Stomach (tissue), 19 donors: ENCODE measurements at regions of chr11 and their contacts with region 1.

Region 1: DNA sequence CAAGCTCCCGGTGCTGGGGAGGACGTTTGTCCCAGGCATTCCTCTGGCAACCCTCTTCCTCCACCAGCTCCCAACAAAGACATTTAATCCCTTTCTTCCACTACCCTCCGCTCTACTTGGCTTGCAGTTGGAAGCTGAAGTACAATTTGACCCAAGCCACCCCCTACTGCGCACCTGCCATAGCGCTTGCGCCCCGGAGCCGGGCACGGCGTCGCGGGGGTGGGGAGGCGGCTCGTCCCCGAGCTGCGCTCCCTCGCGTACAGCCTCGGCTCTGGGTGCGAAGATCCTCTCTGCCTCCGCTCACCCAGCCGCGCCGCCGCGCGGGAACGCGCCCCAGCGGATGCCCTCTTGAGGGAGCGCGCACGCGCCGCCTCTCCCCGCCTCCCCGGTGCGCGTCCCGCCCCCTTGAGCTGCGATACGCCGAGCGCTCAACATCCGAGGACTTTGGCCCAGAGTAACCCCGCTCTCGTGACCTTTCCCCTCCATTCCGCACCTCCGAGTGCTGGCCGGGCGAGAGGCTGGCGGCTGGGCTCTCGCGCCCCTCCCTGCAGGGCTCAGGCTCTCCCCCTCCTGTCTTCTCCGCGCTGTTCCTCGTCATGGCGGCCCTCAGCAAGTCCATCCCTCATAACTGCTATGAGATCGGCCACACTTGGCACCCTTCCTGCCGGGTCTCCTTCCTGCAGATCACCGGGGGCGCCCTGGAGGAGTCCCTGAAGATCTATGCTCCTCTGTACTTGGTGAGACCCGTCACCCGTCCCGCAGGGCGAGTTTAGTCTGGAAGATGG is at the start of gene TMEM135:
- DNase-seq: peak; percentile 95 to 97
- H3K4me3 ChIP-seq: peak within 1 kb of the TSS; percentile 68 to 91 (median 70)
- H3K27ac ChIP-seq: peak within 1 kb of the TSS; percentile 81 to 91 (median 89)
- H3K4me1 ChIP-seq: peaks cover 11 to 47% (median 26%) of the 10 kb centered on the region in 4 donors
- H3K27me3 ChIP-seq: no peaks in the 10 kb centered on the region
- CTCF ChIP-seq: no peak
- EP300 ChIP-seq: no peak
- POLR2A ChIP-seq: peak in 1 of 4 donors; percentile 11
- total RNA-seq, gene TMEM135: 0.58 to 202 (median 10.3) TPM

Region 2: DNA sequence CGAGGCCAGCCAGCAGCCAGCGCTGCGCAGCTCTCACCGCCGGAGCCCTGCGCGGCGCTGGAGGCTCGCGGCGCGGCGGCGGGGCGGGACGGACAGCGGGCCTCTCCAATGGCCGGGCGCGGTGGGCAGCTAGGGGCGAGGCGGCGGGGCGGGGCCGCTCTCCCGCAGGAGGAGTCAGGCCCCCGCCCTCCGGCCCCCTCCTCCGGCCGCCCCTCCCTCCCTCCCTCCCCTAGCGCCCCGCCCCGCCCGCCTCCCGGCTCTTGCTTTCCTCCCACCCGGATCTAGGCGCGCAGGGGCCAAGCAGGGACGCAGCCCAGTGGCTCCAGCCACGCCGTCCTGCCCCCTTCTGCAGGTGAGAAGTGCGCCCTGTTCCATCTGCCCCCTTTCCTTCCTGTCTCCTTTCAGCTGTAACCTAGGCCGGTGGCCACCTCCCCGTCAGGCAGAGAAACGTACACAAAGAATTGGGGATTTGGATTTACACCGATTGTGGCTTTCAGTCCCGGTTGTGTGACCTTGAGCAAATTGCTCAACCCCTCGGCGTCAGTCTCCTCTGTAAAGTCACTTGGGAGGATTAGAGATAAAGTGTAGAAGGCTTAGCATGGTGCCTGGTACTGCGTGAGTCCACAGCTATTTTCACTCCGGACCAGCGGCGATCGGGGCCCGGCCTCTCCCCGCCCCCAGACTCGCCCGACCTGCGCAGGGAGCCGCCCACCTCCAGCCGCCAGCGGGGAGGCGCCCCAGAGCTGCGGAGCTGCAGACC is 82.1 kb before region 1 on chr11 and contains the start of gene FZD4:
- intact Hi-C with region 1: loop called (anchors 10 kb)
- DNase-seq: peak; percentile 93 to 98
- H3K4me3 ChIP-seq: peak within 1 kb of the TSS; percentile 84 to 97 (median 90)
- H3K27ac ChIP-seq: peak within 1 kb of the TSS; percentile 91 to 96 (median 93)
- H3K4me1 ChIP-seq: peaks cover 26 to 57% (median 46%) of the 10 kb centered on the region in 4 donors
- H3K27me3 ChIP-seq: peaks cover 0 to 10% (median 4%) of the 10 kb centered on the region in 3 donors
- CTCF ChIP-seq: peak in 2 of 7 experiments; percentile 31 to 36
- EP300 ChIP-seq: no peak
- POLR2A ChIP-seq: peak in 2 of 4 donors; percentile 17 to 50
- total RNA-seq, gene FZD4: 6.1 to 55.8 (median 18.1) TPM